Activated CD8-positive, alpha-beta memory T cell treated with anti-CD3 and anti-CD28 coated beads, Interleukin-2, amount 10 ng/mL, durations not matched to agents 7 days and 5 days (primary cell): ENCODE measurements at regions of chr6 and their contacts with region 1.

Region 1: GRCh38 chr6:30914076-30914853 is at the start of gene VARS2:
- DNase-seq: peak; percentile 90
- ATAC-seq: peak; percentile 98
- H3K4me3 Mint-ChIP-seq: peak within 1 kb of the TSS; percentile 87
- H3K27ac Mint-ChIP-seq: peak within 1 kb of the TSS; percentile 87
- H3K4me1 Mint-ChIP-seq: peaks cover 30% of the 10 kb centered on the region
- H3K27me3 Mint-ChIP-seq: no peaks in the 10 kb centered on the region
- total RNA-seq, gene VARS2: 46.6 to 54.1 TPM

Region 2: GRCh38 chr6:30883685-30884520 is 30.4 kb before region 1 on chr6 and contains the start of gene DDR1:
- CTCF ChIA-PET with region 1: interaction called, 15 read pairs
- DNase-seq: peak; percentile 54
- ATAC-seq: peak; percentile 85
- H3K4me3 Mint-ChIP-seq: peak within 1 kb of the TSS; percentile 66
- H3K27ac Mint-ChIP-seq: no peak within 1 kb of the TSS
- H3K4me1 Mint-ChIP-seq: peaks cover 11% of the 10 kb centered on the region
- H3K27me3 Mint-ChIP-seq: peaks cover 21% of the 10 kb centered on the region
- total RNA-seq, gene DDR1: 3.8 to 4.9 TPM

Region 3: GRCh38 chr6:30955367-30956042 is 41.2 kb after region 1 on chr6:
- CTCF ChIA-PET with region 1: interaction called, 11 read pairs
- DNase-seq: peak; percentile 80
- ATAC-seq: peak; percentile 95
- H3K4me3 Mint-ChIP-seq: peak overlapping the region; percentile 55
- H3K27ac Mint-ChIP-seq: no peak overlapping the region
- H3K4me1 Mint-ChIP-seq: peaks cover 8% of the 10 kb centered on the region
- H3K27me3 Mint-ChIP-seq: peaks cover 89% of the 10 kb centered on the region

Region 4: GRCh38 chr6:31068669-31069340 is 154.5 kb after region 1 on chr6:
- CTCF ChIA-PET with region 1: interaction called, 65 read pairs
- DNase-seq: peak; percentile 85
- ATAC-seq: peak; percentile 99
- H3K4me3 Mint-ChIP-seq: no peak overlapping the region
- H3K27ac Mint-ChIP-seq: no peak overlapping the region
- H3K4me1 Mint-ChIP-seq: no peaks in the 10 kb centered on the region
- H3K27me3 Mint-ChIP-seq: peaks cover 15% of the 10 kb centered on the region

Region 5: DNA sequence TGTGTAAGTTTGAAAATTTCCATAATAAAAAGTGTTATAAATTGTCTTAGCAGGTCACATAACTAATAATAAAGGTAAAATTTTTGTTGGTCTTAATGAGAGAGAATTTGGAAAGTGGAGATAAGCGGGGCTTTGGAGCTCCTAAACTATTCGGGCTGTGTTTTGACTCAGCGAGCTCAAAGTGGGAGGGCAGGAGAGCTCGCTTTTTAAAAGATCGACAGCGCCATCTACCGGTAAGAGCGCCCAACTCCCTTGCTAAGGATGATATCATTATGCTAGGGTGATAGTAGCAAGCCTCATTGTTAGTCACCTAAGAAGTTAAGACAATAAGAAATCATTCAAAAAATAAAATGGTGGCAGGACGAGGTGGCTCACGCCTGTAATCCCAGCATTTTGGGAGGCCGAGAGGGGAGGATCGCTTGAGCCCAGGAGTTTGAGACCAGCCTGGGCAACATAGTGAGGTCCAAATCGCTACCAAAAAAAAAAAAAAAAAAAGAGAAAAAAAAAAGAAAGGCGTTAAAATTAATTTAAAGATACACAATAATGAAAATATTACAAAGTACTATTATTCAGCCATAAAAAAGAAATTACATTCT is 173.3 kb after region 1 on chr6:
- CTCF ChIA-PET with region 1: interaction called, 39 read pairs
- DNase-seq: peak; percentile 91
- ATAC-seq: peak; percentile 97
- H3K4me3 Mint-ChIP-seq: no peak overlapping the region
- H3K27ac Mint-ChIP-seq: no peak overlapping the region
- H3K4me1 Mint-ChIP-seq: peaks cover 6% of the 10 kb centered on the region
- H3K27me3 Mint-ChIP-seq: peaks cover 23% of the 10 kb centered on the region